GM18951 (cell line): ENCODE measurements at regions of chr4 and their contacts with region 1.

Region 1: GRCh38 chr4:89039730-89040338 is 17.2 kb downstream of the FAM13A start:
- POLR2A ChIP-seq: no peak

Region 2: GRCh38 chr4:88533937-88534750 is 505.7 kb before region 1 on chr4:
- in situ Hi-C with region 1: loop called (anchors 10 kb)
- POLR2A ChIP-seq: no peak

Region 3: DNA sequence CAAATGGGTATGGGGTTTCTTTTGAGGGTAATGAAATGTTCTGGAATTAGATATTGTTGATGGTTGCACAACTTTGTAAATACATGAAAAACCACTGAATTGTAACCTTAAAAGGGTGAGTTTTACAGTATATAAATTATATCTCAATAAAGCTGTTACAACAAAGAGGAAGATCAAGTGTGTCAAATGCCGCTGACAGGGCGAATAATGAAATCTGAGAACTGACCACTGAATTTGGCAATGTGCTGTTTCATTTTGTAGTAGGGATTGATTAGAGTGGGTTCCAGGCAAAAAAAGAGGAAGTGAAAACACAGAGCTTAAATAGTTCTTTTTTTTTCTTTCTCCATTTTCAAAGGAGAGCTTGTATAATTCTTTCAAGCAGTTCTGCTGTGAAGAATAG is 181.1 kb before region 1 on chr4:
- in situ Hi-C with region 1: no loop called
- POLR2A ChIP-seq: no peak

Region 4: GRCh38 chr4:89625599-89626298 is 585.9 kb after region 1 on chr4:
- in situ Hi-C with region 1: no loop called
- POLR2A ChIP-seq: no peak